HepG2 (cell line): ENCODE measurements at regions of chr13 and their contacts with region 1.

Region 1: GRCh38 chr13:96119921-96120320 is 30.0 kb downstream of the HS6ST3 start:
- DNase-seq: no peak
- ATAC-seq: no peak
- H3K4me3 ChIP-seq: no peak overlapping the region
- H3K27ac ChIP-seq: no peak overlapping the region
- H3K4me1 ChIP-seq: no peaks in the 10 kb centered on the region
- H3K27me3 ChIP-seq: no peaks in the 10 kb centered on the region; a peak in 2 of 5 replicates
- CTCF ChIP-seq: no peak
- EP300 ChIP-seq: no peak
- POLR2A ChIP-seq: no peak
- RAD21 ChIP-seq: no peak

Region 2: GRCh38 chr13:96460609-96461008 is 340.7 kb after region 1 on chr13:
- CTCF ChIA-PET with region 1: no interaction called
- POLR2A ChIA-PET with region 1: no interaction called
- in situ Hi-C with region 1: no loop called
- intact Hi-C with region 1: loop called (anchors 10 kb)
- DNase-seq: no peak
- ATAC-seq: no peak
- H3K4me3 ChIP-seq: no peak overlapping the region
- H3K27ac ChIP-seq: no peak overlapping the region
- H3K4me1 ChIP-seq: no peaks in the 10 kb centered on the region
- H3K27me3 ChIP-seq: no peaks in the 10 kb centered on the region
- CTCF ChIP-seq: no peak
- EP300 ChIP-seq: no peak
- POLR2A ChIP-seq: no peak
- RAD21 ChIP-seq: no peak